IMR-90 (cell line): ENCODE measurements at regions of chr18 and their contacts with region 1.

Region 1: GRCh38 chr18:76604935-76605240 is 109.8 kb upstream of the ZNF516 start:
- DNase-seq: peak; percentile 28
- ATAC-seq: peak; percentile 63
- H3K4me3 ChIP-seq: no peak overlapping the region
- H3K27ac ChIP-seq: no peak overlapping the region
- H3K4me1 ChIP-seq: no peaks in the 10 kb centered on the region
- H3K27me3 ChIP-seq: no peaks in the 10 kb centered on the region
- CTCF ChIP-seq: no peak
- POLR2A ChIP-seq: no peak
- RAD21 ChIP-seq: no peak

Region 2: DNA sequence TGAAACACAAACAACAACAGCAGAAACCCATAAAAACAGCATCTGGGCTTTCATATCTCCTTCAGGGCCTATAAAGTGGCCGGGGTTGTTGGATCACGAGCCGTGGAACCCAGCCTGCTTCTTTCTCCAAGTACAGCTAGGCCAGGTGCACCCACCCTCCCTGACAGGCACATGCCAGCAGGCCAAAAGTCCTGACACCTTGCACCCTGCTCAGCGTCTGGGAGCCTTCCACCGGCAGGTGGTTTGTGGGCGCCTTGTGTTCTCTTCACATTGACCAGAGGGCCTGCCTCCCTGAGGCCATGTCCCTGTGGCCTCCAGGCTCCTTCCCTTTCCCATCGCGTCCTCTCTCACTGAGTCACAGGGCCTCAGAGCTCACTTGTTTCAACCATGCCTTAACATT is 381.5 kb before region 1 on chr18:
- CTCF ChIA-PET with region 1: no interaction called
- POLR2A ChIA-PET with region 1: no interaction called
- dilution Hi-C with region 1: no loop called
- in situ Hi-C with region 1: no loop called
- intact Hi-C with region 1: no loop called
- DNase-seq: no peak
- ATAC-seq: no peak
- H3K4me3 ChIP-seq: no peak overlapping the region
- H3K27ac ChIP-seq: no peak overlapping the region
- H3K4me1 ChIP-seq: no peaks in the 10 kb centered on the region
- H3K27me3 ChIP-seq: no peaks in the 10 kb centered on the region
- CTCF ChIP-seq: no peak
- POLR2A ChIP-seq: no peak
- RAD21 ChIP-seq: no peak

Region 3: DNA sequence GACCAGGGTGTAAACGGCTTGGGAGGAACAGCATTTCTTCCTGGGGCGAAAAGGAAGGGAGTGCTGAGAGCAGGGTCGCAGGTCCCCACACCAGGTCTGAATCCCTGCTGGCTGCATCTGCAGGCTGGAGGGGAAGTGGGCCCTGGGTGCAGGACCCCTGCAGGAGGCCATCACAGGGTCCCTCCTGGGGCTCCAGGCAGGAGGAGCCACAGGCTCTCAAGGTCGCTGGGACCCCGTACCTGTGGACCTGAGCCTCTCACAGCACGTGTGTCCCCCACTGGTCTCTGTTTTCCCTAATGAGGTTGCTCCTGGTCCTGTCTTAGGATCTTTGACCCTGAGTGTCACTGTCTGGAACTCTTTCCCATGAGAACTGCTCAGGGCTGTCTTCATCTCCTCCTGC is 69.7 kb after region 1 on chr18:
- CTCF ChIA-PET with region 1: no interaction called
- POLR2A ChIA-PET with region 1: no interaction called
- dilution Hi-C with region 1: no loop called
- in situ Hi-C with region 1: no loop called
- intact Hi-C with region 1: loop called (anchors 2 kb)
- DNase-seq: no peak
- ATAC-seq: no peak
- H3K4me3 ChIP-seq: no peak overlapping the region
- H3K27ac ChIP-seq: no peak overlapping the region
- H3K4me1 ChIP-seq: no peaks in the 10 kb centered on the region
- H3K27me3 ChIP-seq: peaks cover 22% of the 10 kb centered on the region
- CTCF ChIP-seq: no peak
- POLR2A ChIP-seq: no peak
- RAD21 ChIP-seq: no peak

Region 4: GRCh38 chr18:76741365-76741764 is 136.5 kb after region 1 on chr18:
- CTCF ChIA-PET with region 1: no interaction called
- POLR2A ChIA-PET with region 1: no interaction called
- dilution Hi-C with region 1: no loop called
- in situ Hi-C with region 1: no loop called
- intact Hi-C with region 1: no loop called
- DNase-seq: no peak
- ATAC-seq: no peak
- H3K4me3 ChIP-seq: no peak overlapping the region
- H3K27ac ChIP-seq: no peak overlapping the region
- H3K4me1 ChIP-seq: 0 out of 2 replicates have a peak, but pooled peaks cover 2% of the 10 kb centered on the region
- H3K27me3 ChIP-seq: peaks cover under 1% of the 10 kb centered on the region; the same call in 1 of the 2 replicates
- CTCF ChIP-seq: no peak
- POLR2A ChIP-seq: no peak
- RAD21 ChIP-seq: no peak